ENCODE measurements at regions of chr15 and their contacts with region 1.

Region 1: DNA sequence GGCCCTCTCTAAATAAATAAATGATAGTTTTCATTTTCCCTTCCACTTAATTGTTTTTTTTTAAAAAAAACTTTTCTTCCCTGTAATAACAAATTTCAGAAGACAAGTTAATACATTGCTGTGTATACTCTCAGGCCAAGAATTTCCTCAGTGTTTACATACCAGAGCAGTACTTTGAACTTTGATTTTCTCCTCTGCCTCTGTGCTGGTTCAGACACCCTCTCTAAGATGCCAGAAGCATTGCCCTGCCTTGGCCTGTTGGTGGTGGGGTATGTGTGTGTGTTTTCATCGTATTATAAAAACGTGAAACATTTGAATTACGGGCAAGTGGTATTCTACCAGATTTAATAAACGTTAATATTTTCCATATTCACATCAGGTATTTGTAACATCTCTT is 70.1 kb downstream of the SMAD3 start:
- DNase-seq: no peak
- H3K4me3 ChIP-seq: no peak overlapping the region
- H3K27ac ChIP-seq: peak overlapping the region in 23 of 59 donors; percentile 7 to 76 (median 60)
- H3K27me3 ChIP-seq: peaks cover 0 to 11% (median 0%) of the 10 kb centered on the region in 45 donors
- CTCF ChIP-seq: no peak

Region 2: DNA sequence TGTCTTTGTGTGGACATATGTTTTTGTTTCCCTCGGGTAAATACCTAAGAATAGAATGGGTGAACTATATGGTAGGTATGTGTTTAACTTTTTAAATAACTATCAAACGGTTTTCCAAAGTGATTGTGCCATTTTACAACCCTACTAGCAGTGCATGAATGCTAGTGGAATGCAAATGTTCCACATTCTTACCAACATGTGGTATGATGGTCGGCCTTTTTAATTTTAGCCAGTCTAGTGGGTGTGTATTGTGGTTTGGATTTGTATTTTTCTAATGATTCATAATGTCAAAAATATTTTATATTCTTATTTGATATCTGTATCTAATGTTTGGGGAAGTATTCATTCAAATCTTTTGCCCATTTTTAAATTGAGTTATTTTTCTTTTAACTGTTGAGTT is 138.3 kb before region 1 on chr15:
- intact Hi-C with region 1: no loop called
- DNase-seq: no peak
- H3K4me3 ChIP-seq: no peak overlapping the region
- H3K27ac ChIP-seq: no peak overlapping the region
- H3K27me3 ChIP-seq: no peaks in the 10 kb centered on the region
- CTCF ChIP-seq: no peak

Region 3: GRCh38 chr15:67076147-67076843 is 59.2 kb before region 1 on chr15:
- intact Hi-C with region 1: loop called in 1 of 2 experiments (anchors 5 kb)
- DNase-seq: no peak
- H3K4me3 ChIP-seq: no peak overlapping the region
- H3K27ac ChIP-seq: peak overlapping the region in 1 of 59 donors; percentile 30
- H3K27me3 ChIP-seq: no peaks in the 10 kb centered on the region
- CTCF ChIP-seq: no peak

Measured in dorsolateral prefrontal cortex (tissue), 120 donors.